Caco-2 (cell line): ENCODE measurements at regions of chr10 and their contacts with region 1.

Region 1: DNA sequence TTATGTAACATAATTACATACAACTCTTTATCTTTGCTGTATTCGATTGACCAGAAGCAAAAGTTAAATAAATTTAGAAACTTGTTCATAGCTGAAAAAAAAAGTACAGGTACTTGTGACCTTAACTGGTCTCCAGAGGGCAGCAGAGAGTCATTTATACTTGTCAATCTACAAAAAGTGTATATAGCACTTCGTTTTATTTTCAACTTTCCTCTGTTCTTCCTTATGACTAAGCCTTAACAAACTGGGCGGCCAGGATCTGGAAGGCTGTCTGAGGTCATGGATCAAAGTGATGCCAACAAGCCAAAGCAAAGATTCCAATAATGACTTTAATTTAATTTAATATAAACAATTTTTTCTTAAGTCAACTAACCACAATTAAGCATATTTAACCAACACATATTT is 29.8 kb downstream of the C10orf67 start:
- DNase-seq: peak in 1 of 2 experiments; percentile 70
- H3K4me3 ChIP-seq: no peak overlapping the region
- H3K4me3 Mint-ChIP-seq: no peak overlapping the region
- H3K27ac Mint-ChIP-seq: no peak overlapping the region
- H3K4me1 ChIP-seq: no peaks in the 10 kb centered on the region
- H3K4me1 Mint-ChIP-seq: no peaks in the 10 kb centered on the region
- H3K27me3 ChIP-seq: no peaks in the 10 kb centered on the region
- H3K27me3 Mint-ChIP-seq: peaks cover 5% of the 10 kb centered on the region
- CTCF ChIP-seq: peak; percentile 81 to 82

Region 2: GRCh38 chr10:23358357-23358756 is 43.5 kb after region 1 on chr10:
- CTCF ChIA-PET with region 1: no interaction called
- POLR2A ChIA-PET with region 1: no interaction called
- intact Hi-C with region 1: no loop called
- DNase-seq: no peak
- H3K4me3 ChIP-seq: no peak overlapping the region
- H3K4me3 Mint-ChIP-seq: no peak overlapping the region
- H3K27ac Mint-ChIP-seq: no peak overlapping the region
- H3K4me1 ChIP-seq: no peaks in the 10 kb centered on the region
- H3K4me1 Mint-ChIP-seq: no peaks in the 10 kb centered on the region
- H3K27me3 ChIP-seq: no peaks in the 10 kb centered on the region
- H3K27me3 Mint-ChIP-seq: peaks cover 9% of the 10 kb centered on the region
- CTCF ChIP-seq: no peak

Region 3: GRCh38 chr10:23525406-23525805 is 210.6 kb after region 1 on chr10:
- CTCF ChIA-PET with region 1: interaction called, 4 read pairs
- POLR2A ChIA-PET with region 1: no interaction called
- intact Hi-C with region 1: loop called (anchors 1 kb)
- DNase-seq: no peak
- H3K4me3 ChIP-seq: no peak overlapping the region
- H3K4me3 Mint-ChIP-seq: no peak overlapping the region
- H3K27ac Mint-ChIP-seq: no peak overlapping the region
- H3K4me1 ChIP-seq: no peaks in the 10 kb centered on the region
- H3K4me1 Mint-ChIP-seq: no peaks in the 10 kb centered on the region
- H3K27me3 ChIP-seq: no peaks in the 10 kb centered on the region
- H3K27me3 Mint-ChIP-seq: peaks cover 8% of the 10 kb centered on the region
- CTCF ChIP-seq: no peak

Region 4: DNA sequence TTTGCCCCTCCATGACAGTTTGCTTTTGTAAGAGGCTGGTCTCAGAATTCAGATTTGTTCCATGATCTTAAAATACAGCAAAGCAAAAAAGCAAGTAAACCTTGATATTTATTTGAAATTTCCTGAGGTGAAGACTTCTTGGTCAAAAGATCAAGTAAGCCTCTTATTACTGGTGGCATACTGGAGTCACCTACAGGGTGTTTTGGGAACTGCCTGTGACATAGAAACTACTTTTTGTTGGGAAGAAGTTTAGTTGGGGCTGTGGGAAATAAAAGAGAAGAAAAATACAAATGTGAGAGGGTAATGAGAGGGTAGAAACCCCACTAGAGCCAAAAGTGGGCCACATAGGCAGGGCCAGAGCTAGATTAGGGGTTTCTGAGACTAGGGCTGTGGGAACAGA is 341.9 kb after region 1 on chr10:
- CTCF ChIA-PET with region 1: interaction called, 3 read pairs
- POLR2A ChIA-PET with region 1: no interaction called
- intact Hi-C with region 1: loop called (anchors 1 kb)
- DNase-seq: peak in 1 of 2 experiments; percentile 25
- H3K4me3 ChIP-seq: no peak overlapping the region
- H3K4me3 Mint-ChIP-seq: no peak overlapping the region
- H3K27ac Mint-ChIP-seq: no peak overlapping the region
- H3K4me1 ChIP-seq: no peaks in the 10 kb centered on the region
- H3K4me1 Mint-ChIP-seq: no peaks in the 10 kb centered on the region
- H3K27me3 ChIP-seq: no peaks in the 10 kb centered on the region; the same call in 1 of the 2 replicates
- H3K27me3 Mint-ChIP-seq: peaks cover 9% of the 10 kb centered on the region
- CTCF ChIP-seq: peak; percentile 72 to 74

Region 5: DNA sequence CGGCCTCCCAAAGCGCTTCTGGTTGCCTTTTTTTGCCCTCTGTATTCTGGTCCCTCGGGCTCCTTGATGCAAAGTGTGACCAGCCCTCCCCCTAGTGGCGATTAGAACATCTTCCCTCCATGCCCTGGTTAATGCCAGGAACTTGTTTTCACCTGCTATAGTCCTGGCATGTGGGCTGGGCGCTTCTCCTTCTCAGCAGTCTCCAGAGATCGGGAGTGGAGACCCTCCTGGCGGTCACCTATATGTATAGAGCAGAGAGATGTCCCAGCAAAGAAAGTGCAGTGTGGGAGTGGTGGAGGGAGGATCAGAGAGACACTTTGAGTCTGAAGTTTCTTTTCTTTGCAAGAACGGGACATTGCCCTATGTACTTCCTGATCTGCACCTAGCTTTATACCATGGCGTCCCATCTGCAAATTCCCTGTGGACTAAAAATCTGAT is 388.2 kb after region 1 on chr10:
- CTCF ChIA-PET with region 1: interaction called, 5 read pairs
- POLR2A ChIA-PET with region 1: no interaction called
- intact Hi-C with region 1: loop called (anchors 1 kb)
- DNase-seq: peak; percentile 78
- H3K4me3 ChIP-seq: no peak overlapping the region
- H3K4me3 Mint-ChIP-seq: no peak overlapping the region
- H3K27ac Mint-ChIP-seq: no peak overlapping the region
- H3K4me1 ChIP-seq: no peaks in the 10 kb centered on the region
- H3K4me1 Mint-ChIP-seq: no peaks in the 10 kb centered on the region
- H3K27me3 ChIP-seq: no peaks in the 10 kb centered on the region
- H3K27me3 Mint-ChIP-seq: peaks cover 15% of the 10 kb centered on the region
- CTCF ChIP-seq: peak; percentile 92 to 95